ENCODE measurements at regions of chr5 and their contacts with region 1.

Region 1: GRCh38 chr5:1503241-1504068 is 20.3 kb downstream of the LPCAT1 start:
- DNase-seq: no peak
- ATAC-seq: no peak
- H3K4me3 Mint-ChIP-seq: no peak overlapping the region
- H3K27ac Mint-ChIP-seq: no peak overlapping the region
- H3K4me1 Mint-ChIP-seq: peaks cover 32% of the 10 kb centered on the region
- H3K27me3 Mint-ChIP-seq: no peaks in the 10 kb centered on the region
- CTCF ChIP-seq: no peak

Region 2: DNA sequence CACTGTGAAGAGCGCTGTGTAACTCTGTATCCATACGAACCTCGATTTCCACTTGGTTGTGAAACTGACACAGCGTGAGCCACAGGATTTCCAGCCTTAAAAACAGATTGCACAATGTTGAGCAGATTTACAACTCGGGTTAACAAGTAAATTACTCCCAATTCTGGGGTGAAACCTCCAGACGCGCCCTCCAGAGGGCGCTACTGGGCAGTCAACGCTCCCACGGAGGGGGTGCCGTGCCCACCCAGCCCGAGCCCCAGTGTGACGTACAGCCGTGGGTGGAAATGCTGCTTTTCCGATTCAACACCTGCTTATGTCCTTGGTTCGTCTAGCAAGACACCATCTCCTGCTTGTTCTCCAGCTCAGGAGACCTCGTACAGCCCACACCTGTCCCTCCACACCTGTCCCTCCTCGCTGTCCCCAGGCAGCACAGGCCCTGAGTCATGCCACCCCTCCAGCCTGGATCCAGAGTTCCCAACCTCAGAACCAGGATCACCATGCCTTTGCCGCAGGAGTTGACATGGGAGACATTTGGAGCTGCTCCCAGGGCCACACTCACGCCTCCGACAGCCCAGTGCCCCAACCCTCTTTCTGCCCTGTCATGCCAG is 23.8 kb before region 1 on chr5:
- CTCF ChIA-PET with region 1: interaction called, 10 read pairs
- POLR2A ChIA-PET with region 1: interaction called, 3 read pairs
- intact Hi-C with region 1: no loop called
- DNase-seq: peak; percentile 68
- ATAC-seq: peak; percentile 81
- H3K4me3 Mint-ChIP-seq: no peak overlapping the region
- H3K27ac Mint-ChIP-seq: no peak overlapping the region
- H3K4me1 Mint-ChIP-seq: peaks cover 9% of the 10 kb centered on the region
- H3K27me3 Mint-ChIP-seq: no peaks in the 10 kb centered on the region
- CTCF ChIP-seq: peak; percentile 91

Region 3: GRCh38 chr5:1514022-1514818 is 10.8 kb after region 1 on chr5:
- CTCF ChIA-PET with region 1: no interaction called
- POLR2A ChIA-PET with region 1: no interaction called
- intact Hi-C with region 1: no loop called
- DNase-seq: no peak
- ATAC-seq: no peak
- H3K4me3 Mint-ChIP-seq: no peak overlapping the region
- H3K27ac Mint-ChIP-seq: no peak overlapping the region
- H3K4me1 Mint-ChIP-seq: peaks cover 30% of the 10 kb centered on the region
- H3K27me3 Mint-ChIP-seq: no peaks in the 10 kb centered on the region
- CTCF ChIP-seq: no peak

Measured in activated CD8-positive, alpha-beta T cell treated with anti-CD3 and anti-CD28 coated beads for 36 hours (primary cell).